ENCODE measurements at regions of chr1 and their contacts with region 1.

Region 1: DNA sequence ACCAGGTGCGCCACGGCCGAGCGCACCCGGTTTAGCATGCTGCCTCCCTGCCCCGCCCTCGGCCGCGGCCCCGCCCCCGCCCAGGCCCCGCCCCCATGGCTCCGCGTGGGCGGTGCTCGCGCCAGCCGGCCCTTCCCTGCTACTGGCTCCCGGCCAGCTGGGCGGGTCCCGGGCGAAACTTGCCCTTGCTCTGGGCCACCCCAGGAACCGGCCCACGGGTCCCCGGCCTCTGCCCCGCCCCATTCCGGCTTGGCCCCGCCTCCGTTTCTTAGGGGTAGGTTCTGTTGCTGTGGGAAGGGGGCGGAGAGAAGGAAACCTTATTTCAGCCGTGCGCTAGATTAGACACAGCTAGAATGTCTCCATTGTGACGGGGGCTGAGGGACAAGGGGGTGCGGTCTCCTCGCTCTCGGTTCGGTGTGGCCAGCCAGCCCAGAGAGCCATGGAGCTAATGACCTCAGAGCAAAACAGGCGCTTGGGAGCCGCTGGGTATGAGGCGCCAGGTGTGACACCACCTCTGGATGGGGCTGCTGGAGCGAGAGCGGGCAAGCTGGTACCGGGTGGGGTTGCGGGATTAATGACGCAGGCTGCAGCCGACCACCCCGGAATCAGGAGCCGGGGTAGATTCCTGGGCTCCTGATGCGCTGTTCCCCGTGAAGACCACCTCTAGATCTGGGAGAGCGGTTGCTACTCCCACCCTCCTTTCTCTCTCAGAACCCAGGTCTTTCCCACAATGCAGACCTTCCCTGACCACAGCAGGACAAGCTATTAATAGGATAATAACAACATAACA is at the start of gene PPM1J:
- DNase-seq: peak; percentile 98
- ATAC-seq: peak; percentile 93
- H3K4me3 Mint-ChIP-seq: peak within 1 kb of the TSS; percentile 81
- H3K27ac Mint-ChIP-seq: peak within 1 kb of the TSS; percentile 64
- H3K4me1 Mint-ChIP-seq: peaks cover 28% of the 10 kb centered on the region
- H3K27me3 Mint-ChIP-seq: peaks cover 38% of the 10 kb centered on the region
- total RNA-seq, gene PPM1J: not detected

Region 2: DNA sequence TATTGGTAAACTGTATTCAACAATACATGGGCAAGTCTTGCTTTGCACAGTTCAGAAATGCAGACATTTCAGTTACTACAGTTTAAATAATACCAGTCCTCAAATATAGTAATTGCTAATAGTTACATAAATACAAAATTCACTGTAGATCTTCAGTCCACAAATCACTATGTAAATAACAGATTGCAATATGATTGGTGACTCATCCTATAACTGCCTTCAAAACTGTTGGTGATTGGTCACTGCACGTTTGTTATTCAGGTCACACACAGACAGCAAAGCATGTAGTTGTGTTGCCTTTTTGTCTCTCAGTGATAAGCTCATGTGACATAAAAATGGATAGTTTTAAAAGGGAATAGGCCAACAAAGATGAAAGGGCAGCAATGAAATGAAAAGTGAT is 506.0 kb before region 1 on chr1:
- CTCF ChIA-PET with region 1: no interaction called
- POLR2A ChIA-PET with region 1: no interaction called
- DNase-seq: no peak
- ATAC-seq: no peak
- H3K4me3 Mint-ChIP-seq: no peak overlapping the region
- H3K27ac Mint-ChIP-seq: no peak overlapping the region
- H3K4me1 Mint-ChIP-seq: no peaks in the 10 kb centered on the region
- H3K27me3 Mint-ChIP-seq: peaks cover 11% of the 10 kb centered on the region

Region 3: GRCh38 chr1:112619520-112620376 is 95.7 kb before region 1 on chr1 and contains the start of gene CAPZA1:
- CTCF ChIA-PET with region 1: interaction called, 5 read pairs
- POLR2A ChIA-PET with region 1: interaction called, 10 read pairs
- DNase-seq: peak; percentile 95
- ATAC-seq: peak; percentile 80
- H3K4me3 Mint-ChIP-seq: peak within 1 kb of the TSS; percentile 100
- H3K27ac Mint-ChIP-seq: peak within 1 kb of the TSS; percentile 100
- H3K4me1 Mint-ChIP-seq: peaks cover 36% of the 10 kb centered on the region
- H3K27me3 Mint-ChIP-seq: no peaks in the 10 kb centered on the region
- total RNA-seq, gene CAPZA1: 279 to 280 TPM

Region 4: GRCh38 chr1:112798292-112798691 is 82.8 kb after region 1 on chr1:
- CTCF ChIA-PET with region 1: interaction called, 173 read pairs
- POLR2A ChIA-PET with region 1: no interaction called
- DNase-seq: no peak
- ATAC-seq: no peak
- H3K4me3 Mint-ChIP-seq: no peak overlapping the region
- H3K27ac Mint-ChIP-seq: no peak overlapping the region
- H3K4me1 Mint-ChIP-seq: no peaks in the 10 kb centered on the region
- H3K27me3 Mint-ChIP-seq: no peaks in the 10 kb centered on the region

Region 5: DNA sequence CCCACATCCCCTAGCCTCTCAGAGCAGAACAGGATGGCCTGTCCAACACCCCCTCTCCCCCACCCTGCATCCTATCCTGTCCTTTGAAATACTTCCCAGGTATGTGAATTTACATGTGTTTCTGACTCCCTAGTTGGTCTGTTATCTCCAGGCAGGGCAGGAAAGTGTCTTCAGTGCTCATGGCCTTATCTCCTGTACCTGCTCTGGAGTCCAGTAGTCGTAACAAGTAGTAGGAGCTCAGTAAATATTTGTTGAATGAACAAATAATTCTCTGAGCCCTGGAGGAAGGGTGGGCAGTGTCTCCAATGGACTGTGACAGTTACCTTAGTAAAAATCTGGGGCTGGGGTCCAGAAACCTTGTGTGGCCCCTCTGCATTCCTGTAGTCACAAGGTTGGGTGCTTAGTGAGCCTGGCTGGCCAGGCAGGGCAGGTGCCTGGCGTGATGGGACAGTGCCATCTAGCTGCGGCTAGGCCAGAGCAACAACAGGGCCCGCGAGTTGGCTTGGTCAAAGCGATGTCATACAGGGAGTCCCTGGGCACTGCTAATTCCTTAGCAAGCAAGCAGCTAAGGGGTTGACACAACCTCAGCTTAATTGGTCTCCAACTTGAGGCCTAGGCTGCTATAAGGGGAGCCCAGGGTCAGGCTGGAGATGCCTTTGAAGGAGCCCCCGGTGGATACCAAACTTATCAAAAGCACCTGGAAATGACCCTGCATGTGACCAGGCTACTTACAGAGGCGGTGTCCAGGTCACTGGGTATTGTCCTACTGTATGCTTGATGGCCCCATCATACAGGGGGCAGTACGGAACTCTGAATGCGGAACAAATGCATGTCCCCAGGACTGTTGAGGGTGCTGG is 88.7 kb after region 1 on chr1:
- CTCF ChIA-PET with region 1: interaction called, 173 read pairs
- POLR2A ChIA-PET with region 1: interaction called, 3 read pairs
- DNase-seq: peak; percentile 66
- ATAC-seq: peak; percentile 84
- H3K4me3 Mint-ChIP-seq: no peak overlapping the region
- H3K27ac Mint-ChIP-seq: no peak overlapping the region
- H3K4me1 Mint-ChIP-seq: no peaks in the 10 kb centered on the region
- H3K27me3 Mint-ChIP-seq: peaks cover 16% of the 10 kb centered on the region

Region 6: DNA sequence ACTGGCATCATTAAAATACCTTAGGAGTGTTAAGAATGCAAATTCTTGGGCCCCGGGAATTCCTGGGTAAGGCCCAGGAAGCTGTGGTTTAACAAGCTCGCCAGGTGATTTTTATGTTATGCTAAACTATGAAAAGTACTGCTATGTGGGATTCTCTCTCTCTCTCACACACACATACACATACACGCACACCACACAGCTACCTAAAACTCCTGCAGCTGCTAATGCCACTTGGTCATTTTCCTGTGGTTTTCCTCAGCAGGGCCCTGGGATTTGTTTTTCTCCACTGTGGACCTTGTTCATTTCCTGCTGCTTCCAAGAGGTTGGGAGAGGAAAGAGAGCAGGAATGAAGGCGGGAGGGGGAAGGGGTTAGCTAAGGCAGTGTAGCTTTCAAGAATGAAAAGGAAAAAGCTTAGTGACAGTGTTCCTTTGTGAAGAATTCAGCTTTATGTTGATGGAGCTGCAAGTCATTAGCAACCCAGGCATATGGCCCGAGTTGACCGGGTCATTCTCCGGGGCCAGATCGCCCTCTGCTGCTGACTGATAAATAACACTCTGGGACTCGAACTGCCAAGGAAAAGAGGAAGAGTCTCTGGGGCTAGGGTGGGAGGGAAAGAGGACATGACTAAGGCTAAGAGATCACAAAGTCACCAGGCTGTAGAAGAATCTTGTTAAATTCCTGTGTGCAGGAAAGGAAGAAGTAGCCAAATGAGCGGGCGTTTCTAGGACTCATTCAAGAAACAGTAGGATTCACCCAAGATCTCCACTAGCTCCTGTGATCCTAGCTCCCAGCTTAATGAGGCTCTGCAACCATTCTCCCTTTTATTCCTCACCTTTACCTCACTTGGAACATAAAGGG is 327.1 kb after region 1 on chr1:
- CTCF ChIA-PET with region 1: interaction called, 15 read pairs
- POLR2A ChIA-PET with region 1: no interaction called
- DNase-seq: peak; percentile 45
- ATAC-seq: no peak
- H3K4me3 Mint-ChIP-seq: no peak overlapping the region
- H3K27ac Mint-ChIP-seq: no peak overlapping the region
- H3K4me1 Mint-ChIP-seq: peaks cover 40% of the 10 kb centered on the region
- H3K27me3 Mint-ChIP-seq: no peaks in the 10 kb centered on the region

Measured in activated CD8-positive, alpha-beta T cell treated with anti-CD3 and anti-CD28 coated beads, Interleukin-2, amount 10 ng/mL, durations not matched to agents 7 days and 5 days (primary cell).